Dorsolateral prefrontal cortex (tissue), 120 donors: ENCODE measurements at regions of chr17 and their contacts with region 1.

Region 1: GRCh38 chr17:7252176-7253043 is at the start of gene ELP5:
- DNase-seq: peak; percentile 85 to 93 (median 90)
- H3K4me3 ChIP-seq: peak within 1 kb of the TSS; percentile 56 to 100 (median 94)
- H3K27ac ChIP-seq: peak within 1 kb of the TSS; percentile 96 to 100 (median 99)
- H3K27me3 ChIP-seq: no peaks in the 10 kb centered on the region
- CTCF ChIP-seq: peak in 54 of 56 donors; percentile 19 to 71 (median 49)
- total RNA-seq, gene ELP5: 25.8 to 51.7 (median 36.8) TPM

Region 2: DNA sequence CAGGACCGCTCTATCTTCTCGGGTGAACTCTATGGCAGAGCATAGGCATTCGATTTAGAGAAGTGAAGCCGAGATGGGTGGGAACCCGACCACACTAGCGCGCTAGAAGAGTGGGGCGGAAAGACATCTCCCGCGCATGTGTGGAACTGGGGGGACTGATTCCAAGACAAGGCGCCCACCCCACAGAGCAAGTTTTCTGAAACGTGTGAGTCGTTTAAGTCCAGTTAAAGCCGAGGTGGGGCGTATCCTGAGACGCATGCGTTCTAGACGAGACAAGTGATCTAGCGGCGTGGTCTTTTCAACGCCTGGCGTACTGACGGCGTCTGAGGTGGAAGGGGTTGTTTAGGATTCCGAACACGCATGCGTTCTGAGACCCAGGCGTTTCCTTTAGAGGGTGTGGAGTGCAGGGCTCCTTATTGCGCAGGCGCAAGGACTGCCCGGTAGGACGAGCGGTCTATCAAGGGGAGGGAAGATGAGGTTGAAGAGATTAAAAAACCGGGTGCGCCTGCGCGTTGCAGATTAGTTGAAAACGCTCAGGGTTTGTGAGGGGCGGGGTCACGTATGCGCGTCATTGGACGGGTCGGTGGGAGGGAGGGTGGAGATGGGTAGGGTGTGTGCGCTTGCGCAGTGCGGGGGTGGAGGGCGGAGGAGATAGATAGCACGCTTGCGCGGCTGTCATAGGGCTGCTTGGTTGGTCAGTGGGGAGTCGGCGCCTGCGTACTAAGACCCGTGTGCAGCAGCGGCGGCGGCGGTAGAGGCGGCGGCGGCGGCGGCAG is 54.7 kb after region 1 on chr17 and contains the start of gene EIF5A:
- intact Hi-C with region 1: loop called in 1 of 2 experiments (anchors 5 kb)
- DNase-seq: peak; percentile 98 to 99 (median 99)
- H3K4me3 ChIP-seq: peak within 1 kb of the TSS; percentile 62 to 93 (median 84)
- H3K27ac ChIP-seq: peak within 1 kb of the TSS; percentile 73 to 99 (median 98)
- H3K27me3 ChIP-seq: no peaks in the 10 kb centered on the region
- CTCF ChIP-seq: peak in 9 of 56 donors; percentile 0 to 31 (median 12)
- total RNA-seq, gene EIF5A: 117 to 216 (median 169) TPM

Region 3: GRCh38 chr17:7548585-7549400 is 296.4 kb after region 1 on chr17 and contains the start of gene TNFSF12:
- intact Hi-C with region 1: no loop called
- DNase-seq: peak; percentile 36 to 66 (median 59)
- H3K4me3 ChIP-seq: peak within 1 kb of the TSS; percentile 50 to 96 (median 79)
- H3K27ac ChIP-seq: peak within 1 kb of the TSS; percentile 62 to 98 (median 94)
- H3K27me3 ChIP-seq: no peaks in the 10 kb centered on the region
- CTCF ChIP-seq: peak in 18 of 56 donors; percentile 5 to 38 (median 16)
- total RNA-seq, gene TNFSF12: 25.3 to 97.2 (median 50.2) TPM